ENCODE measurements at regions of chr1 and their contacts with region 1.

Region 1: GRCh38 chr1:162983671-162984425 is 85.3 kb upstream of the RGS4 start:
- DNase-seq: no peak
- H3K4me3 Mint-ChIP-seq: no peak overlapping the region
- H3K27ac Mint-ChIP-seq: no peak overlapping the region
- H3K4me1 Mint-ChIP-seq: no peaks in the 10 kb centered on the region
- H3K27me3 Mint-ChIP-seq: peaks cover 11% of the 10 kb centered on the region

Region 2: DNA sequence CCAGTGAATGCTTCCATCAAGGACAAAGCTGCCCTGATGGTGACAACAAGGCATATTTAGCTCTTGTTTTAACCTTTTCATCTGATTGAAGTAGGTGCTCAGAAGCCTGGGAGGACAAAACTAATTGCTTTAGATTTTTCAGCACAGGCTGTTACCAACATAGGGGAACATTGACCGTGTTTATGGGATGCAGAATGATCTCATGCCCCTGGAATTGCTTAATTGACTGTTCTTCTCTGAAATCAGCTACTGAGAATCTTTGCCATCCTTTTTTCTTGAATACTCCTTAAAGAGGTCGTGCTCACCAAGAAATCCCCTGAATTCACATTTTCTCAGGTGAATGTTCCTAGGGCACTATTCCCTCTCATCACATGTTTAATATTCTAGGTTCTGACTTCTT is 26.9 kb before region 1 on chr1:
- CTCF ChIA-PET with region 1: no interaction called
- intact Hi-C with region 1: loop called (anchors 2 kb)
- DNase-seq: no peak
- H3K4me3 Mint-ChIP-seq: no peak overlapping the region
- H3K27ac Mint-ChIP-seq: no peak overlapping the region
- H3K4me1 Mint-ChIP-seq: peaks cover 6% of the 10 kb centered on the region
- H3K27me3 Mint-ChIP-seq: peaks cover 15% of the 10 kb centered on the region